Left cardiac atrium (tissue), 4 donors: ENCODE measurements at regions of chr16 and their contacts with region 1.

Region 1: GRCh38 chr16:5025171-5025632 is 8.5 kb downstream of the NAGPA start:
- DNase-seq: peak; percentile 36
- ATAC-seq: peak; percentile 45 to 47

Region 2: GRCh38 chr16:4538350-4539235 is 486.6 kb before region 1 on chr16 and contains the start of gene CDIP1:
- intact Hi-C with region 1: no loop called
- DNase-seq: peak; percentile 99
- ATAC-seq: peak; percentile 97
- total RNA-seq, gene CDIP1: 34.1 to 42.9 TPM

Region 3: DNA sequence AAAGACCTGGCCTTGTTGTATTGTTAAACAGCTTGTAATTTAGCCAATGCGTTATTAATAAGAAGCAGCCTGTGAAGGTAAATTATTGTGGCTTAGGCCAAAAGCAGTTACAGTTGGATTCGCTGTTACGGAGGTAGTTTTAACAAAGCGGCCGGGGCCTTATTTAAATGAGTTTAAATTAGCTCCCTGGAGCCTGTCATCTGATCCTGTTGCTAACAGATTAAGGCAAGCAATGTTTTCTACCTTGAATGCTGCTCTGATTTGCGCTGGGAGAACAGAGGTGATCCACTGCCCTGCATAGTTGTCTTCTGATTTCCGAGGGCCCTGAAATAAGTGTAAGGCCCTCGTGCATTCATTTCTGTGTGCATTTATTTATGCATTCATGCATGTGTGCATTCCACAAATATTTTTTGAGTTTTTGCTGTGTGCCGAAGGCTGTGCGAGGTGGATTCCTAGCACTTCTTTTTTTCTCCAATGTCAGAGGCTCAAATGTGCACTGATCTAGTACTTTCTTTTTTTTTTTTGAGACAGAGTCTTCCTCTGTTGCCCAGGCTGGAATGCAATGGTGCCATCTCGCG is 56.2 kb before region 1 on chr16:
- intact Hi-C with region 1: loop called in 1 of 2 experiments (anchors 10 kb)
- DNase-seq: no peak
- ATAC-seq: no peak

Region 4: GRCh38 chr16:5186381-5186903 is 161.2 kb after region 1 on chr16:
- intact Hi-C with region 1: no loop called
- DNase-seq: no peak
- ATAC-seq: no peak